ENCODE measurements at regions of chr6 and their contacts with region 1.

Region 1: GRCh38 chr6:52491203-52492069 is 71.3 kb downstream of the EFHC1 start:
- DNase-seq: peak; percentile 44
- H3K4me3 ChIP-seq: no peak overlapping the region
- H3K27ac ChIP-seq: peak overlapping the region; percentile 65
- H3K4me1 ChIP-seq: peaks cover 35% of the 10 kb centered on the region
- H3K27me3 ChIP-seq: no peaks in the 10 kb centered on the region
- CTCF ChIP-seq: no peak
- POLR2A ChIP-seq: no peak

Region 2: DNA sequence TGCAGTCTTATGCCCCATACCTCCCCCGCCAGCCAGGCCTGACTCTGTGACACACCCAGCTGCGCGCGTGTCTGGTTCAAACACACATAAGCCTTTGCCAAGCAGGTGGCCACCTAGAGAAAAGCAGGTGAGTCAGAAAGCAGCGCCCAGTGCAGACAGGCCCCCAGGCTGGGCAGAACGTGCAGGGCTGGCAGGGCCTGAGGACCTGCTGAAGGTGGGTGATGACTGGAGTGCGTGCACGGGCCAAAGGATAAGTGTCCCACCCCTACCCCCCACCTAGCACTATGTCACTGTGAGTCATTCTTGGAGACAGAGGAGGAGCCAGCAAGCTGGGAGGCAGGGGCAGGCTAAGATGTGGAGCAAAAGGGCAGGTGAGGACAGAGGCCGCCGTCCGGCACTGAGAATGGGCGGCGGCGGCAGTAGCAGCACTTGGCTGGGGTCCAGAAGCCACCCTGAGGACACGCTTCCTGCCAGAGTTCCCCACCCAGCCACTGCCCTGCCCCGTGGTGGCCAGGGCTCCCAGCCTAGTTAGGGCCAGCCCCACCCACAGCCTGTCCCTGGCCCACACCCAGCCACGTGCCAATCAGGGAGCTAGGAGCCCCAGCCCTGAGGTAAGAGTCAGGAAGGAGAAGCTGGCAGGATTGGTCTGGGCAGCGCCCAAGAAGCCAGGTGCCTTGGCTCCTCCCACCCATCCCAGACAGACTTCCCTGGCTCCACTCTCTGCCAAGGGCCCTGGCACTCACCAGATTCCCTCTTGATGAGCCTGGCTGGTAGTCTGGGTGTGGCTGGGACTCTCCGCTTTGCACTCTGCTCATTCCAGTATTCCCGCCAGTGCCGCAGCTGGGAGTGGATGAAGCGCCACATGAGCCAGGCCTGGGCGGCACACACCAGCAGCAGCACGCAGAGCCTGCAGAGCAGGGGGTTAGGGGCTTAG is 12.7 kb after region 1 on chr6:
- CTCF ChIA-PET with region 1: interaction called, 6 read pairs
- POLR2A ChIA-PET with region 1: no interaction called
- dilution Hi-C with region 1: no loop called
- intact Hi-C with region 1: loop called (anchors 1 kb)
- DNase-seq: peak; percentile 49
- H3K4me3 ChIP-seq: no peak overlapping the region
- H3K27ac ChIP-seq: peak overlapping the region; percentile 79
- H3K4me1 ChIP-seq: peaks cover 27% of the 10 kb centered on the region
- H3K27me3 ChIP-seq: no peaks in the 10 kb centered on the region
- CTCF ChIP-seq: no peak
- POLR2A ChIP-seq: no peak

Measured in endothelial cell of umbilical vein (primary cell).